ENCODE measurements at regions of chr2 and their contacts with region 1.

Region 1: GRCh38 chr2:30711646-30712085 is 95.6 kb downstream of the CAPN13 start:
- DNase-seq: peak; percentile 78
- H3K4me3 ChIP-seq: no peak overlapping the region
- H3K27ac ChIP-seq: no peak overlapping the region
- H3K27me3 ChIP-seq: peaks cover 5% of the 10 kb centered on the region
- CTCF ChIP-seq: peak; percentile 100

Region 2: DNA sequence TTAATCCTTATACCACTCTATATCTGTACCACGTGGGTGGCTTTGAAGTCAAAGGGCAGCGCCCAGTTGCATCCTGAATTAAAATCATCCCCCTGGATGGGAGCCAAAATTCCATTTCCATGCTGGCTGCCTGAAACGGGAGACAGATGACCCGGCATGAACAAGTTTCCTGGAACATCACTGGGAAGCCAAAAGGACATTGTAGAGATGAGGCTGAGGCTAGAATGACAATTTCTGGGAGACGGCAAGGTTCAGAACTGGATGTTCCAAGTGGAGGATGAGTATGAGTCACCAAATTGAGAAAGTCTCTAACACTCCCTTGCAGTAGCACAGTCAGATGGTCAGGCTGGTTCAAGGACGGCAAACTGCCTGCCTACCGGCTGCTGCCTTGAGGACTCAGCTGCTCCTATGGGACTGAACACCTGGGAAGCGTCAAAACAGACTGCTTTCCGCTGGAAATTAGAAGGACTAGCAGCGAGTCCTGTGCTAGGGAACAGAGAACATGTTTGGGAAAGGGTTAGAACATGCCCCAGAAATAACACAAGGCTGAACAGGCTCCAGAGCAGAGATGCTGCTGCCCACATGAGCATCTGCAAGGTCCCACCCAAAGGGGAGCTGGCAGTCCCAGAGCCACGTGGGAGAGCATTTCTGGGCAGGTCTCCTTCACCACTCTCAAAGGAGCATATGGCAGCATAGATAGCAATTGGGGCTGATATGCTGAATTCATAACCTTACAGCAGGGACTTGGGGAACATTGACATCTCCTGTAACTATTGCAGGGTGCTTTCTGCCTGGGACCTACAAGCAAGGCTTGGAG is 532.8 kb before region 1 on chr2:
- CTCF ChIA-PET with region 1: interaction called, 19 read pairs
- POLR2A ChIA-PET with region 1: interaction called, 5 read pairs
- DNase-seq: no peak
- H3K4me3 ChIP-seq: no peak overlapping the region
- H3K27ac ChIP-seq: no peak overlapping the region
- H3K27me3 ChIP-seq: peaks cover 4% of the 10 kb centered on the region
- CTCF ChIP-seq: no peak

Region 3: GRCh38 chr2:30225131-30225762 is 486.4 kb before region 1 on chr2:
- CTCF ChIA-PET with region 1: interaction called, 37 read pairs
- POLR2A ChIA-PET with region 1: interaction called, 28 read pairs
- DNase-seq: peak; percentile 56
- H3K4me3 ChIP-seq: peak overlapping the region; percentile 60
- H3K27ac ChIP-seq: peak overlapping the region; percentile 94
- H3K27me3 ChIP-seq: peaks cover 2% of the 10 kb centered on the region
- CTCF ChIP-seq: peak; percentile 24

Region 4: GRCh38 chr2:30287857-30288513 is 423.7 kb before region 1 on chr2:
- CTCF ChIA-PET with region 1: interaction called, 12 read pairs
- POLR2A ChIA-PET with region 1: no interaction called
- DNase-seq: no peak
- H3K4me3 ChIP-seq: no peak overlapping the region
- H3K27ac ChIP-seq: no peak overlapping the region
- H3K27me3 ChIP-seq: no peaks in the 10 kb centered on the region
- CTCF ChIP-seq: no peak

Region 5: GRCh38 chr2:30481323-30481800 is 230.3 kb before region 1 on chr2:
- CTCF ChIA-PET with region 1: interaction called, 10 read pairs
- POLR2A ChIA-PET with region 1: no interaction called
- DNase-seq: no peak
- H3K4me3 ChIP-seq: no peak overlapping the region
- H3K27ac ChIP-seq: no peak overlapping the region
- H3K27me3 ChIP-seq: no peaks in the 10 kb centered on the region
- CTCF ChIP-seq: no peak

Region 6: DNA sequence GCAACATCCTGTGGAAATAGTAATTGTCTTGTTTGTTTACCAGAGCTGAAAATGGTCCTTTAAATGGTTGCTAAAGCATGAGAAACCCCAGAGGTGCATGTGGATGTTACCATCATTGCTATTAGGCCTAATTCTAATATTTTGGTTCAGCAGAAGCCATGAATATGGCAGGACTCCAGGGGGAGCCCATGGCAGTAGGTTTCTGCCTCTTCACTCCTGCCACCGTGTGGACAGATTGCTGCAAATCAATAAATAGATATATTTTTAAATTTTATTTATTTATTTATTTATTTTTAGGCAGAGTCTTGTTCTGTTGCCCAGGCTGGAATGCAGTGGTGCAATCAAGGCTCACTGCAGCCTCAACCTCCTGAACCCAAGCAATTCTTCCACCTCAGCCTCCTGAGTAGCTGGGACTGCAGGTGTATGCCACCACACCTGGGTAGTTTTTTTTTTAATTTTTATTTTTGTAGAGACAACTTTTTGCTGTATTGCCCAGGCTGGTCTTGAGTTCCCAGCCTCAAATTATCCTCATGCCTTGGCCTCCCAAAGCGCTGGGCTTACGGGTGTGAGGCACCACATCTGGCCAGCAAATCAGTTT is 150.5 kb after region 1 on chr2:
- CTCF ChIA-PET with region 1: interaction called, 21 read pairs
- POLR2A ChIA-PET with region 1: no interaction called
- DNase-seq: peak; percentile 24
- H3K4me3 ChIP-seq: no peak overlapping the region
- H3K27ac ChIP-seq: no peak overlapping the region
- H3K27me3 ChIP-seq: no peaks in the 10 kb centered on the region
- CTCF ChIP-seq: peak; percentile 69

Region 7: GRCh38 chr2:31031132-31031706 is 319.6 kb after region 1 on chr2:
- CTCF ChIA-PET with region 1: no interaction called
- POLR2A ChIA-PET with region 1: no interaction called
- DNase-seq: no peak
- H3K4me3 ChIP-seq: no peak overlapping the region
- H3K27ac ChIP-seq: no peak overlapping the region
- H3K27me3 ChIP-seq: no peaks in the 10 kb centered on the region
- CTCF ChIP-seq: no peak

Region 8: GRCh38 chr2:31729764-31730092 is 1018.1 kb after region 1 on chr2:
- CTCF ChIA-PET with region 1: interaction called, 12 read pairs
- POLR2A ChIA-PET with region 1: no interaction called
- DNase-seq: peak; percentile 4
- H3K4me3 ChIP-seq: no peak overlapping the region
- H3K27ac ChIP-seq: no peak overlapping the region
- H3K27me3 ChIP-seq: no peaks in the 10 kb centered on the region
- CTCF ChIP-seq: peak; percentile 69

Measured in AG04450 (cell line).